ENCODE measurements at regions of chr5 and their contacts with region 1.

Region 1: GRCh38 chr5:120512068-120512467 is 48.0 kb downstream of the PRR16 start:
- DNase-seq: peak; percentile 47 to 50
- H3K4me3 ChIP-seq: peak overlapping the region in 1 of 4 experiments; percentile 28; a peak in 1 of 8 replicates
- H3K27ac ChIP-seq: peak overlapping the region; percentile 66; the same call in 1 of the 2 replicates
- H3K4me1 ChIP-seq: peaks cover 0 to 22% (median 11%) of the 10 kb centered on the region in 4 experiments; a peak in 4 of 7 replicates
- H3K27me3 ChIP-seq: no peaks in the 10 kb centered on the region
- CTCF ChIP-seq: no peak
- EP300 ChIP-seq: peak in 1 of 2 experiments; percentile 81; a peak in 1 of 3 replicates
- POLR2A ChIP-seq: 0 out of 3 replicates have a peak, but pooled peaks of 1 of the 2 experiments have one; percentile 25
- RAD21 ChIP-seq: no peak

Region 2: DNA sequence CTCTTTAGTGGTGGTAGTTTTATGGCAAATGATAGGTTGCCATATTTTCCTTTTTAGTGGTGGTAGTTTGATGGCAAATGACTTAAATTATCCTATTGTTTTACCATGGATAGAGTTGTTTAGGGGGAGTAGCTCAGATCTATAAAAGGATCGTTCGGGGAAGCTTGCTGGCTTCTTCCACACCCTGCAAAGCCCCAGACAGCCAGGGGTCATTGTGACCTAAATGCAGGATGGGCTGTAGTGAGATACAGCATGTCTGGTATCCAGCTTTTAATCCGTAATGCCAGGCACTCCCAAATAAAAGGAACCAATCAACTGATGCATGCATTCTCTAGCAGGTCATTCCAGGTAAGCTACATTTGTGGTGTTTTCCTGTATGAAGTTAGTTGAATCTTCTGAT is 19.1 kb after region 1 on chr5:
- CTCF ChIA-PET with region 1: interaction called, 14 read pairs
- POLR2A ChIA-PET with region 1: interaction called, 4 read pairs
- DNase-seq: no peak
- H3K4me3 ChIP-seq: no peak overlapping the region
- H3K27ac ChIP-seq: no peak overlapping the region
- H3K4me1 ChIP-seq: peaks cover 0 to 3% (median 1%) of the 10 kb centered on the region in 4 experiments; a peak in 2 of 7 replicates
- H3K27me3 ChIP-seq: no peaks in the 10 kb centered on the region
- CTCF ChIP-seq: no peak
- EP300 ChIP-seq: no peak
- POLR2A ChIP-seq: no peak
- RAD21 ChIP-seq: no peak